Activated CD4-positive, alpha-beta T cell treated with anti-CD3 and anti-CD28 coated beads for 36 hours (primary cell): ENCODE measurements at regions of chr17 and their contacts with region 1.

Region 1: DNA sequence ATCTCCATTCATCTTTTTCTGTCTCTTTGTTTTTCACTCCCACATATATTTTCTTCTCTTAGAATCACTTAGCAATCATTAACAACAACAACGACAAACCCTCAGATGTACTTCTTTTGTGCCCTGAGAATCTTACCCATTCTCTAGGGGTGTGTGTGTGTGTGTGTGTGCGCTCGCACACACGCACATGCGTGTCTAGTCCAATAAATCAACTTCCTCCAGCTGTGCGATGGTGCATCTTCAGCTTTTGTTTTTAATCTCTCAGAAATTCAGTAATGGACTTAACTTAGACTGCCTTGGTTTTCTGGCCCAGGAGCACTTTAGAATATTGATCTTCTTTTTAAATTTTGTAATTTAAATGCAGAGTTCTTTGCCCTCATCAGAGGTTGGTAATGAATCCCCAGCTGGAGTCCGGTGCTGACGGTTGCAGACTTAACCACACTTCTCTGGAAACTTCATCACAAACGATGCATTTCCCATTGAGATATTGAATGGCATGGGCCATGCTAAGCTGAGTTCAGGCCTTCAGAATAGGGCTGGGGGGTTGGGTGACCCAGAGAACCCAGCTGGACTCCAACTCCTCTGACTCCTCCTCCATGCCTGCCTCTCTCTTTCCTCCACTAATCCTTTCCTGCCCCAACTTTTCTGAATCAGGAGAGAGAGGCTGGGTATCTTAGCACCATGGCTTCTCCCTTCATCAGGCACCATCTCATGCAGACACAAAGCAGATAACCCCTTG is 193.9 kb downstream of the ZNF18 start:
- DNase-seq: no peak
- ATAC-seq: no peak
- H3K4me3 Mint-ChIP-seq: no peak overlapping the region
- H3K27ac Mint-ChIP-seq: no peak overlapping the region
- H3K4me1 Mint-ChIP-seq: no peaks in the 10 kb centered on the region
- H3K27me3 Mint-ChIP-seq: no peaks in the 10 kb centered on the region

Region 2: DNA sequence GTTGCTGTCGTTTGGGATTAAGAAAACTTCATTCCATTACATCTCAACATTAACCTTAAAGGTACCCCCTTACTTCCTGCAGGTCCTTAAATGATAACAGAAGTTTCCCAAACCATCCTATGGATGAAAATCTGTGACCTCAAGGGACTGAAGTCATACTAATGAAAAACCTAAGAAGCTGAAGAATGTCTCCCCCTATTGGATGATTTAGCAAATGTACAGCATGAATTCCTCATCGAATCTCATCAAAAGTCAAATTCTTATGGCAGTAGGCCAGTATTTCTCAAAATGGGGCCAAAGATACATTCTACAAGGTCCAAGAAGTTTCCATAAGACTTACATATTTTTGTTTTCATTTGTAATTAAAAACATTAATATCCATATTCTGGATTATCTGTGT is 1119.5 kb before region 1 on chr17:
- CTCF ChIA-PET with region 1: no interaction called
- POLR2A ChIA-PET with region 1: no interaction called
- intact Hi-C with region 1: no loop called
- DNase-seq: no peak
- ATAC-seq: no peak
- H3K4me3 Mint-ChIP-seq: no peak overlapping the region
- H3K27ac Mint-ChIP-seq: no peak overlapping the region
- H3K4me1 Mint-ChIP-seq: peaks cover 6% of the 10 kb centered on the region
- H3K27me3 Mint-ChIP-seq: no peaks in the 10 kb centered on the region

Region 3: DNA sequence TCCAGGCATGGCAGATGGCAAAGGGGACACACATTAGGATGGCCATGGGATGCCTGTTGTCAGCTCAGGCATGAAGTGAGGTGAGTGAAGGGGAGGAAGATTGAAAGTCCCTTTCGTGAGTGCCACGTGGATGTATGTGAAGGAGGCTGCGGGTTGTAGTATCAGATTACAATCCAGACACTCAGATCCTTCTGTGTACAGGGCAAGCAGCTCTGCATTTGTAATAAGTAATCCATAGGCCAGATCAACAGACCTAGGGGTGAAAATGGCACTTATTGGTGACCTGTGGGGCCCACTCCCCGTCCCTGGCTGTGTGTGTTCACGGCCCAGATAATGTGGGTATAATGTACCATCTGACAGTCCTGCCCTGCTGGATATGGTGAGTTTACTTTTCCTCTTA is 45.6 kb before region 1 on chr17:
- CTCF ChIA-PET with region 1: no interaction called
- POLR2A ChIA-PET with region 1: no interaction called
- intact Hi-C with region 1: loop called in 1 of 2 experiments (anchors 10 kb)
- DNase-seq: no peak
- ATAC-seq: no peak
- H3K4me3 Mint-ChIP-seq: no peak overlapping the region
- H3K27ac Mint-ChIP-seq: no peak overlapping the region
- H3K4me1 Mint-ChIP-seq: no peaks in the 10 kb centered on the region
- H3K27me3 Mint-ChIP-seq: no peaks in the 10 kb centered on the region

Region 4: GRCh38 chr17:12485361-12485906 is 682.0 kb after region 1 on chr17:
- CTCF ChIA-PET with region 1: no interaction called
- POLR2A ChIA-PET with region 1: no interaction called
- intact Hi-C with region 1: no loop called
- DNase-seq: no peak
- ATAC-seq: no peak
- H3K4me3 Mint-ChIP-seq: no peak overlapping the region
- H3K27ac Mint-ChIP-seq: no peak overlapping the region
- H3K4me1 Mint-ChIP-seq: no peaks in the 10 kb centered on the region
- H3K27me3 Mint-ChIP-seq: no peaks in the 10 kb centered on the region